OCI-LY7 (cell line): ENCODE measurements at regions of chr10 and their contacts with region 1.

Region 1: GRCh38 chr10:102752934-102753664 is 9.4 kb downstream of the WBP1L start:
- DNase-seq: peak; percentile 56
- H3K4me3 ChIP-seq: no peak overlapping the region
- H3K27ac ChIP-seq: no peak overlapping the region
- H3K4me1 ChIP-seq: peaks cover 4% of the 10 kb centered on the region
- CTCF ChIP-seq: peak; percentile 83

Region 2: GRCh38 chr10:102824664-102825063 is 71.6 kb after region 1 on chr10:
- CTCF ChIA-PET with region 1: interaction called, 3 read pairs
- POLR2A ChIA-PET with region 1: no interaction called
- intact Hi-C with region 1: loop called (anchors 5 kb)
- DNase-seq: no peak
- H3K4me3 ChIP-seq: no peak overlapping the region
- H3K27ac ChIP-seq: no peak overlapping the region
- H3K4me1 ChIP-seq: no peaks in the 10 kb centered on the region
- CTCF ChIP-seq: no peak

Region 3: GRCh38 chr10:102919246-102919959 is 166.3 kb after region 1 on chr10:
- CTCF ChIA-PET with region 1: no interaction called
- POLR2A ChIA-PET with region 1: no interaction called
- intact Hi-C with region 1: no loop called
- DNase-seq: no peak
- H3K4me3 ChIP-seq: peak overlapping the region; percentile 96
- H3K27ac ChIP-seq: no peak overlapping the region
- H3K4me1 ChIP-seq: peaks cover 33% of the 10 kb centered on the region
- CTCF ChIP-seq: no peak